ENCODE measurements at regions of chr19 and their contacts with region 1.

Region 1: GRCh38 chr19:6862673-6863078 is 24.7 kb upstream of the ADGRE1 start:
- DNase-seq: peak; percentile 89
- H3K4me3 Mint-ChIP-seq: peak overlapping the region; percentile 68
- H3K27ac Mint-ChIP-seq: peak overlapping the region; percentile 27
- H3K4me1 Mint-ChIP-seq: peaks cover 16% of the 10 kb centered on the region
- H3K27me3 Mint-ChIP-seq: peaks cover 23% of the 10 kb centered on the region
- CTCF ChIP-seq: peak; percentile 88

Region 2: DNA sequence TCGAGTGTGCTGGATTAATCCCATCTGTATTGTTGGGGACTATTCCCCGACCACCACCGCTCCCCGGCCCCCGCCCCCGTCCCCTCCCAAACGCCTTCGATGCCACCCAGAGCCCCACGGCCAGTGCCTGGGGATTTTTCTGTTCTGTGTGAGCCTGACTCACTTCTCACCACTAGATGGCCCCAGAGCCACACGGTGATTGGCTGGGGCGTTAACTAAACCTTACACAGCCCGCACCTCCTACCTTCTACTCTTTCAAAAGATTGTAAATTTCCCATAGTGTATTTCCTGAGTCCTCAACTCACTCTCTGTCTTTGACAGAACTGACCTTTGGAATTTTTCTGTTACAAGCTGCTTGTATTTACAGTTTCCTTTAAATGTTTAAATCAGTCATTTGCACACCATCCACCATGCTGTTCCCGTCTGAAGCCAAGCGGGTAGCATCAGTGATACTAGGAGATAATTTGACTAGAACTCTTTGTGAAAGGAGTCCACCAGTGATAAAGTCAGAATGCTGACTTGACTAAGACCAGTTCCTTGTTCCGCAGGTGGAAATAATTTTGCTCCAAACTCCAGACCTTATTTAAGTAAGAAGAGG is 813.8 kb before region 1 on chr19:
- CTCF ChIA-PET with region 1: no interaction called
- POLR2A ChIA-PET with region 1: no interaction called
- intact Hi-C with region 1: loop called (anchors 2 kb)
- DNase-seq: peak; percentile 89
- H3K4me3 Mint-ChIP-seq: no peak overlapping the region
- H3K27ac Mint-ChIP-seq: no peak overlapping the region
- H3K4me1 Mint-ChIP-seq: peaks cover 7% of the 10 kb centered on the region
- H3K27me3 Mint-ChIP-seq: no peaks in the 10 kb centered on the region
- CTCF ChIP-seq: peak; percentile 89

Region 3: DNA sequence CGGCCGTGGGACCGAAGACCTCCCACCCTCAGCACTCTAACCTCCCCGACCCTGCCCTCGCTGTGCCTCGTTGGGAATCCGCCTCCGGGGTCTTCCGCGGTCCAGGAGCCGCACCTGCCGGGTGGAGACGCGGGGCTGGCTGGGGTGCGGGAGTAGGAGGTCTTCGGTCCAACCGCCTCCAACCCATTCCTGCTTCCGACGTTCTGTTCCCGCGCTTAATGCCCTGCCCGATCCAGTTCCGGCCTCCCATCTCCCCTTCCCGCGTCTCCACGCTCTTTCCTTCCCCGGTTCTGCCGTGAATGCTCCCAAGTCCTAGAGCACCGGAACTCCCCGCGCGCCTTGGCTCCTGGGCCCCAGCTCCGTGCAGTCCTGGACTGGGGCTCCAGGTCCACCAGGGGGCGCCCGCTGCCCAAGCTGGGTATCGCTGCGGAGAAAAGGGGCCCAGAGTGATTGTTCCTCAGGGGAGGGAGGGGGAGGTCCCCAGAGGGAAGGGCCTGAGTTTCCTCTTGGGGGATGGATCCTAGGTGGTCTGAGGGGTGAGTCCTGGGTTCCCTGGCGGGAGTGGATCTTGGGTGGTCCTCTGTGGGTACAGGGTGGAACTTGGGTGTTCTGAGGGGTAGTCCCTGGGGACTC is 345.9 kb before region 1 on chr19:
- CTCF ChIA-PET with region 1: interaction called, 12 read pairs
- POLR2A ChIA-PET with region 1: interaction called, 6 read pairs
- intact Hi-C with region 1: loop called (anchors 1 kb)
- DNase-seq: peak; percentile 93
- H3K4me3 Mint-ChIP-seq: peak overlapping the region; percentile 83
- H3K27ac Mint-ChIP-seq: peak overlapping the region; percentile 67
- H3K4me1 Mint-ChIP-seq: peaks cover 18% of the 10 kb centered on the region
- H3K27me3 Mint-ChIP-seq: no peaks in the 10 kb centered on the region
- CTCF ChIP-seq: peak; percentile 94

Region 4: GRCh38 chr19:6632002-6632621 is 230.6 kb before region 1 on chr19:
- CTCF ChIA-PET with region 1: interaction called, 15 read pairs
- POLR2A ChIA-PET with region 1: no interaction called
- intact Hi-C with region 1: loop called (anchors 1 kb)
- DNase-seq: peak; percentile 89
- H3K4me3 Mint-ChIP-seq: no peak overlapping the region
- H3K27ac Mint-ChIP-seq: no peak overlapping the region
- H3K4me1 Mint-ChIP-seq: peaks cover 6% of the 10 kb centered on the region
- H3K27me3 Mint-ChIP-seq: no peaks in the 10 kb centered on the region
- CTCF ChIP-seq: peak; percentile 85

Region 5: DNA sequence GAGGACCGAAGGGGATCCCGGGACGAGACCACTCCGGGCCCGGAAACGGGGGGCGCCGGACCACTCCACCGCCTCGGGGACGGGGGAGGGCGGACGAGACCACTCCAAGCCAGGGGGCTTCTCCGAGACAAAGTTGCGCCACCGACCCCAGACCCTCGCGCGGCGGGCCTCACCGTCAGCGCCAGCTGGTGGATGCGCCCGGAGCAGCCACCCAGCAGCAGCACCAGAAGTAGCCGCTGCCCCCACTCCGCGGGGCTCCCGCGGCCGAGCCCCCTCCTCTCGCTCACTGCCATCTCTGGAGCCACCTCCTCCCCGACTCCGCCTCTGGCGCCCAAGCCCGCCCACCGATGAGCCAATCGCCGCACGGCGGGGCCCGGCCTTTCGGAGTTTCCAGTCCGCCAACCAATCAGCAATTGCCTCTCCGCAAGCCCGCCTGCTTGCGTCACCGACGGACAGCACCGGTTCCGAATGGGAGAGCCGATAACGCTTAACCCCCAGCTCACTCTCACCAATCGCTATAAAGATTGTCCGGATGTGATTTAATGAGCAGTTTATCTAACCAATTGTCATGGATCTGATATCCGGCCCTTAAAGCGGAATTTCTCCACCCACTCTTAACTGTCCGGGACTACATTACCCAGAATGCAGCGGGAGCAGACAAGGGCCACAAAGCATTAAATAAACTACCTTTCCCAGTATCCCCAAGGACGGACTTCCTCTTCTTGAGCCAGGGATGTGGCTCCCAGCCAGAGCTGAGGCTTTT is 125.2 kb before region 1 on chr19 and contains the start of gene GPR108:
- CTCF ChIA-PET with region 1: interaction called, 102 read pairs
- POLR2A ChIA-PET with region 1: interaction called, 94 read pairs
- intact Hi-C with region 1: loop called (anchors 1 kb)
- DNase-seq: peak; percentile 100
- H3K4me3 Mint-ChIP-seq: peak within 1 kb of the TSS; percentile 88
- H3K27ac Mint-ChIP-seq: peak within 1 kb of the TSS; percentile 83
- H3K4me1 Mint-ChIP-seq: peaks cover 27% of the 10 kb centered on the region
- H3K27me3 Mint-ChIP-seq: no peaks in the 10 kb centered on the region
- CTCF ChIP-seq: no peak
- total RNA-seq, gene GPR108: 115 and 124 TPM in 2 replicates

Region 6: GRCh38 chr19:6767357-6768235 is 95.1 kb before region 1 on chr19 and contains the start of gene SH2D3A:
- CTCF ChIA-PET with region 1: interaction called, 3 read pairs
- POLR2A ChIA-PET with region 1: interaction called, 32 read pairs
- intact Hi-C with region 1: loop called (anchors 1 kb)
- DNase-seq: peak; percentile 96
- H3K4me3 Mint-ChIP-seq: peak within 1 kb of the TSS; percentile 76
- H3K27ac Mint-ChIP-seq: peak within 1 kb of the TSS; percentile 74
- H3K4me1 Mint-ChIP-seq: peaks cover 10% of the 10 kb centered on the region
- H3K27me3 Mint-ChIP-seq: no peaks in the 10 kb centered on the region
- CTCF ChIP-seq: no peak
- total RNA-seq, gene SH2D3A: 28.5 and 76.7 TPM in 2 replicates

Region 7: DNA sequence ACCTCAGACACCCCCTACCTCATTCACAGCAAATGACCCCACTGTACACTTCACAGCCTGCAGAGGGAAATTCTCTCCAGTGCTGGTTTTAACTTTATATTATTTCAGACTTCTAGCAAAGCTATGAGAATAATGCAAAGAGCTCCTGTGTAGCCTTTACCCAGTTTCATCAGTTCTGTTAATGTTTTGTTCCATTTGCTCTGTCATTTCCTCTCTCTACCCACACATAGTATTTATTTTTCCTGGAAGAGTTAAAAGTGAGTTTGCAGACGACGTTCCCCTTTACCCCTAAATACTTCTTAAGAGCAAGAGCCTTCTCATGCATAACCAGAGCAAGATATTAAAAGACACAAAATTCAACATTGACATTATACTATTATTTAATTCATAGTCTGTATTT is 25.2 kb before region 1 on chr19:
- CTCF ChIA-PET with region 1: no interaction called
- POLR2A ChIA-PET with region 1: no interaction called
- intact Hi-C with region 1: no loop called
- DNase-seq: no peak
- H3K4me3 Mint-ChIP-seq: no peak overlapping the region
- H3K27ac Mint-ChIP-seq: no peak overlapping the region
- H3K4me1 Mint-ChIP-seq: no peaks in the 10 kb centered on the region
- H3K27me3 Mint-ChIP-seq: peaks cover 36% of the 10 kb centered on the region
- CTCF ChIP-seq: no peak

Measured in MCF 10A (cell line).